ENCODE measurements at regions of chr5 and their contacts with region 1.

Region 1: DNA sequence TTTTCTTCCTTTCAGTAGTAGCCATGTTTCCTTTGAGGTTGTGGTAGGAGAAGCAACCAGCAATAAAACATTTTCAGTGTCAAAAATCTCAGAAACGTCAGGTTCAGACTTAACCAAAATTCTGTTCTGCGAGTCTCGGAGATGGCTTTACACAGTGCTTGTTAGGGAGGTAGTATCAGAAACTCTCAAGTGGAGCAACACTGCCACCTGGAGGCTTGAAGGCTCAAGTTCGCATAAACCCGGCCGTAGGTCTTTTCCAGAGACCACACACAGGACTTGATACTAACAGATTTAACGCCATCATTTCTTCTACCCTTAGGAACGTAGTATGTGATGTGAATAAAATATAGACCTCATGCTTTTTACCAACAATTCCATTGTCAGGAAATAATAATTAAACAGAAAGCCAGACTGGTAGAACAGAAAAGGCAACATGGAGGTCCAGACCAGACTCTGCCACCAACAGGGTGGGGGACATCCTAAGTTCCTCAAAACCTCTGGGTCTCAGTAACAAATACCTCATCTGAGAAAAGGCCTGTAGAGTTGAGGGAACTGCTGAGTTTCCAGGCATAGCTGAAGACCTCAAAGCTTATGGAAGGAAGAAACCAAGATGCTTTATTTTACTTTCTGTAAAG is 8.5 kb downstream of the PTGER4 start:
- DNase-seq: peak; percentile 95
- H3K4me3 Mint-ChIP-seq: peak overlapping the region; percentile 89
- H3K27ac Mint-ChIP-seq: peak overlapping the region; percentile 99
- H3K4me1 Mint-ChIP-seq: peaks cover 64% of the 10 kb centered on the region
- H3K27me3 Mint-ChIP-seq: no peaks in the 10 kb centered on the region

Region 2: DNA sequence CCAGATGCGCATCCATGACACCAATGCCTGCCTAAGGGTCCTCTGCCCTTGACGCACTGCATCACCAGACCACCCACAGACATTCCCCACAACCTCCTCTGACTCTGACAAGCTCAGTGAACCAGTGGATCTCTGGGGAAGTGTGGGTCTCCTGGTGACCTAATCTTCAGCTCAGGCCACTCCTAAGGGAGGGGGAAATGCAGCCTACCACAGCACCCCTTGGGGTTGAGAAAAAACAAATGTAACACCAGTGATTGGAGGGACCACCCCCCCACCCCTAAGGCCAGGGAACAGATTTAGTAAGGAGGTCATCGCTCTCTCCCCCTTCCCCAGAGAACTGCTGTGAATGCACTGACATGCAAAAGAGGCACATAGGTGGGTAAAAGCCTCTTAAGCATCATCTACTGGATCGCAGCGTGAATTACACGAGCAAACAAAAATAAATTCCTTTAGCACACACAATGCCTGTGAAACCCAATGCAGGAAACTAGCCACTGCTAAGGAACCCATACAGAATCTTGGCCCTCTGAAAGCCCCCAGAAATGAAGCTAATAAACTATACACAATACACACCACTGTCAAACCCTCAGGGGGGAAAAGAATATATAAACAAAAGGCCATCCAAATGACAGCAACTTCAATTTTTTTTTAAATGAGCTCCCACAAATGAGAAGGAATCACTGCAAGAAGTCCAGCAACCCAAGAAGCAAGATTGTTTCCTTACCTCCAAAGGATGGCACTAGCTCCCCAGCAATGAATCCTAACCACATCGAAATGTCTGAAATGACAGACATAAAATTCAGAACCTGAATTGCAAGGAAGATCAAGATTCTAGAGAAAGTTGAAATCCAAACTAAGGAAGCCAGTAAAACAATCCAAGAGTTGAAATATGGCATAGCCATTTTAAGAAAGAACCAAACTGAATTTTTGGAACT is 522.2 kb before region 1 on chr5:
- CTCF ChIA-PET with region 1: interaction called, 3 read pairs
- intact Hi-C with region 1: loop called (anchors 1 kb)
- DNase-seq: peak; percentile 61
- H3K4me3 Mint-ChIP-seq: no peak overlapping the region
- H3K27ac Mint-ChIP-seq: peak overlapping the region; percentile 14
- H3K4me1 Mint-ChIP-seq: peaks cover 9% of the 10 kb centered on the region
- H3K27me3 Mint-ChIP-seq: no peaks in the 10 kb centered on the region

Region 3: GRCh38 chr5:40333459-40334244 is 354.6 kb before region 1 on chr5:
- CTCF ChIA-PET with region 1: no interaction called
- intact Hi-C with region 1: loop called (anchors 2 kb)
- DNase-seq: peak; percentile 63
- H3K4me3 Mint-ChIP-seq: no peak overlapping the region
- H3K27ac Mint-ChIP-seq: peak overlapping the region; percentile 41
- H3K4me1 Mint-ChIP-seq: peaks cover 15% of the 10 kb centered on the region
- H3K27me3 Mint-ChIP-seq: peaks cover 3% of the 10 kb centered on the region

Region 4: GRCh38 chr5:40437452-40437861 is 250.8 kb before region 1 on chr5:
- CTCF ChIA-PET with region 1: interaction called, 3 read pairs
- intact Hi-C with region 1: loop called (anchors 1 kb)
- DNase-seq: peak; percentile 19
- H3K4me3 Mint-ChIP-seq: no peak overlapping the region
- H3K27ac Mint-ChIP-seq: peak overlapping the region; percentile 94
- H3K4me1 Mint-ChIP-seq: peaks cover 81% of the 10 kb centered on the region
- H3K27me3 Mint-ChIP-seq: no peaks in the 10 kb centered on the region

Region 5: DNA sequence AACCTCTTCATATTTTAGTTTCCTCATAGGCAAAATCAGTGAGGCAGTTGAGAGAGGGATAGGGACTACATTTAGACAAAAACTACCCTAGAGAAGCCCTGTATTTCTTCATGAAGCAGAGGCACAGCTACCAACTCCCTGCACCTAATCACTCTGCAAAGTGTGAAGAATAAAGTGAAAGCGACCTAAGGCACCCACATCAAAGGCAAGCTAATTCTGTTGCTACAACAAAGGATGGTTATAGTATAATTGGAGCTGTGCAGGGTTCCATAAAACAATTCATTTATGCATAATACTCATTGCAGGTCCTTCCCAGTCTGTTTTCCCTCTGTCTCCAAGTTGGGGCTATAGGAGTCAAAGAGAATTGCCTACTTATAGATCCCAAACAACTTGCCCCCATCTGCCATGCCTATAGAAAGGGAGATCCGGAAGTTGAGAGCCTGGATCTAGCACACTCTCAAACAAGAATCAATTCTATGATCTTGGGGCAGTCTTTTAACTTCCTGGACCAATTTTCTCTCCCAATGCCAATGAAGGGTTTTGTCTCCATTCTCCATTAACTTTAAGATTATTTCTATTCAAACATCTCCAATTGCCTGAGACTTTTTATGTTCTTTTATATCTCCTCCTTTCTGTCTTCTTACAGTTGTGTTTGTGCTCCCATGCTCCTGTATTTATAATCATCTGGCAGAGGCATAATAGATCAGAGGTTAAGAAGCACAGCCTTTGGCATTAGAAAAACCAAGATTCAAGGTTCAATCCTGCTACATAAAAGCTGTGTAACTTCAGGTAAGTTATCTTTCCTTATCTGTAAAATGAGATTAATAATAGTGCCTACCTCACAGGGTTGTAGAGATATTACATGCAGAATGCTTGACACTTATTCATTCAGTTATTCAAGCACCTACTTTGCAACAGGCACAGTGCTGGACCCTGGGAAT is 64.5 kb before region 1 on chr5:
- CTCF ChIA-PET with region 1: no interaction called
- intact Hi-C with region 1: loop called (anchors 2 kb)
- DNase-seq: peak; percentile 60
- H3K4me3 Mint-ChIP-seq: no peak overlapping the region
- H3K27ac Mint-ChIP-seq: no peak overlapping the region
- H3K4me1 Mint-ChIP-seq: peaks cover 45% of the 10 kb centered on the region
- H3K27me3 Mint-ChIP-seq: no peaks in the 10 kb centered on the region

Region 6: DNA sequence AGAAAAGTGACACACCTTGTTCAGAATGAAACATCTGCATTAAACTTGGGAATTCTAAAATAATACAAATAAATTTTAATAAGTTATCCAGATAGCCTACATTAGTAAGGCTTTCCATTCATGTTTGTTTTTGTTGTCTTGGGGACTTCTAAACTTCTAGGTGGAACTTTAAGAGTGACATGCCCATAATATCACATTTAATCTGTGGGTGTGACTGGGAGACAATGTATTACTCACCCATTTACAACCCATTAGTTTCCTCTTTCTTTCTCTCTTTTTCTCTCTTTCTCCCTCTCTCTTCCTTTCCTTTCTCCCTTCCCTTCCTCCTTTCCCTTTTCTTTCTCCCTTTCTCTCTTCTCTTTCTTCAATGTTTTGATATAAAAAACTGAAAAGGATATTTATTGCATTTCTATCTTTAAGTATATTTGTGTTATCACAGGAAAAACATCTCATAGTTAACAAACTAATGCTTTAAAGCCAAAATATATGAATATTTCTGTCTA is 21.0 kb before region 1 on chr5:
- CTCF ChIA-PET with region 1: no interaction called
- intact Hi-C with region 1: no loop called
- DNase-seq: no peak
- H3K4me3 Mint-ChIP-seq: no peak overlapping the region
- H3K27ac Mint-ChIP-seq: no peak overlapping the region
- H3K4me1 Mint-ChIP-seq: peaks cover 36% of the 10 kb centered on the region
- H3K27me3 Mint-ChIP-seq: no peaks in the 10 kb centered on the region

Region 7: GRCh38 chr5:40755407-40756365 is 67.4 kb after region 1 on chr5 and contains the start of gene TTC33:
- CTCF ChIA-PET with region 1: no interaction called
- intact Hi-C with region 1: loop called (anchors 1 kb)
- DNase-seq: peak; percentile 98
- H3K4me3 Mint-ChIP-seq: no peak within 1 kb of the TSS
- H3K27ac Mint-ChIP-seq: no peak within 1 kb of the TSS
- H3K4me1 Mint-ChIP-seq: peaks cover 10% of the 10 kb centered on the region
- H3K27me3 Mint-ChIP-seq: no peaks in the 10 kb centered on the region
- total RNA-seq, gene TTC33: 24.4 to 27.4 TPM

Region 8: GRCh38 chr5:41043109-41043747 is 355.0 kb after region 1 on chr5:
- CTCF ChIA-PET with region 1: no interaction called
- intact Hi-C with region 1: no loop called
- DNase-seq: no peak
- H3K4me3 Mint-ChIP-seq: no peak overlapping the region
- H3K27ac Mint-ChIP-seq: no peak overlapping the region
- H3K4me1 Mint-ChIP-seq: no peaks in the 10 kb centered on the region
- H3K27me3 Mint-ChIP-seq: peaks cover 2% of the 10 kb centered on the region

Region 9: DNA sequence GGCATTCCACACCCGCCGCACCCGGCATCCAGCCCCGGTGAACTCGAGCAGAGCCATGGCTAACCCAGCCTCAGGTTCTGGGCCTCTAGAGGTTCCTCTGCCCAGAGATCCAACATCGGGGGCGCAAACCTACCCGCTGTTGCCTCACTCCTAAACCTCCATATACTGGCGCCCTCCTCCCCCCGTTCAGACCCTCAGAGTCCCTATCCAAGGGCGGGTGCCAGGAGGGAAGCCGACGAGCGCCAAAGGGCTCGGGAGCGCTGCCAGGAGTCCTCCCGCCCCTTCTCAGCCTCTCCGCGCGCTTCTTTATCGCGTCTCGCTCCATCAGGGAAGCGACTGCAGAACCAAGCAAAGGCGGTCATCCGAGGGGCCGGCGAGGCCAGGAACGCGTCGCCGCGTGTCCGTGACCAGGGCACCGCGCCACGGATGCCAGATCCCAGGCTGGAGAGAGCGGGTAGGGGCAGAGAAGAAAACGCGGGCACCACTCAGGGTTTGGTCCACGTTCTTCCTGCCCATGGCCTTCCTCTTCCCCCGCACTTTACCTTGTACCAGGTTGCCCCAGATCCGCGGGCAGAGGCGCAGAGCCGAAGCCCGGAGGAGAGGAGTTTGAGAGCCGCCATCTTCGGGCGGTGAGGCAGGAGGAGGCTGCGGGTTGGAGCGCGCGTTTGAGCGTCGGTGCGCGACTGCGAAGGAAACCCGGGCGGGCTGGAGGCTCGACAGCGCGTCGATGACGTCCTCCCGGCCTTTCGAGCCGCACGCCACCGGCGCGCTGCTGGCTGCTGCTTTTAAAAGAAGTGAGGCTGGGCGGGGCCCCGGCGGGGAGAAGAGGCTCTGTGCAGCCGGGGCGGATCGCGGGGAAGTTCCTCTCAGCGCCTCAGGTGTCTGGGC is 1181.7 kb after region 1 on chr5 and contains the start of gene OXCT1:
- CTCF ChIA-PET with region 1: no interaction called
- intact Hi-C with region 1: loop called (anchors 10 kb)
- DNase-seq: peak; percentile 93
- H3K4me3 Mint-ChIP-seq: peak within 1 kb of the TSS; percentile 92
- H3K27ac Mint-ChIP-seq: peak within 1 kb of the TSS; percentile 88
- H3K4me1 Mint-ChIP-seq: peaks cover 53% of the 10 kb centered on the region
- H3K27me3 Mint-ChIP-seq: no peaks in the 10 kb centered on the region
- total RNA-seq, gene OXCT1: 76.1 to 78.8 TPM